Activated CD4-positive, alpha-beta T cell treated with anti-CD3 and anti-CD28 coated beads for 36 hours (primary cell): ENCODE measurements at regions of chr3 and their contacts with region 1.

Region 1: DNA sequence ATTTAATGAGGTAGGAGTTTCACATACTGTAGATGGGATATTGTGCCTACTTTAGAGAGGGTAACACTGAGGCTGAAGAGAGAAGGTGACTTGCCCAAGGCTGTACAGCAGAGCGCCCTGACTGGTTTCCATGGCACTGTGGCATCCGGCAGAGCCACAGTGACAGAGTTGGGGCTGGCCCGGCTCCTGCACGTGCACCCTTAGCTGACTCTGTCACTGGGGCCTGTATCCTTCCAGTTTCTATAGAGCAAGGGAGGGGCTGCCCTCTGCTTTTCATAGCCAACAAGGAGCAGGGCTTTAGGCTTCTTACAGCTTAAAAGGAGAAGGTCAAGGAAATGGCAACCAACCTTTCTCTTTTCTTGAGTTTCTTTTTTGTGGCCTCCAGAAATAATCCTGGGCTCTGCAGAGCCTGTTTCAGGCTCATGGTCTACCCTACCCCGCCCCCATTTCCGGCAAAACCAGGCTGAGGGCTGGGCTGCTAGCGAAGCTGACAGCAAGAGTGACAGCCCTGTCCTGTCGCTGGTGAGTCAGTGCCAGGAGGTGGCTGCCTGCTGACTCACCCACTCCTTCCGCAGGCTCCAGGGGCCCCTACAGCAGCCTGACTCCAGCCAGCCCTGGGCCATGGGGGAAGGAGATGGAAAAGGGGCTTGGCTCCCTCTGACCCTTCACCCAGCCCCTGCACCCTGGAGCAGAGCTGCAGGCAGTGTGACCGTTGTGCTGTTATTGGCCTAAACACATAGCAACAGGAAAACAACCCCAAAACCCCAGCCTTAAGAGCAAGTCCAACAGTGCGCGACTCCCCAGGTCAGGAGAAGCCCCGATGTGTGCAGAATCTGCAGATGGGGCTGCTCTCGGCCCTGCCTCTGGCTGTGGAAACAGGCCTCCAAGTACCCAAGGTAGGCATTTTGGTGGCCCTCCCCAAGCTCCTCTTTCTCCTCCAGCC is 29.8 kb downstream of the SLC6A6 start:
- DNase-seq: peak; percentile 97
- ATAC-seq: peak; percentile 88
- H3K4me3 Mint-ChIP-seq: peak overlapping the region; percentile 63
- H3K27ac Mint-ChIP-seq: peak overlapping the region; percentile 96
- H3K4me1 Mint-ChIP-seq: peaks cover 86% of the 10 kb centered on the region
- H3K27me3 Mint-ChIP-seq: no peaks in the 10 kb centered on the region

Region 2: DNA sequence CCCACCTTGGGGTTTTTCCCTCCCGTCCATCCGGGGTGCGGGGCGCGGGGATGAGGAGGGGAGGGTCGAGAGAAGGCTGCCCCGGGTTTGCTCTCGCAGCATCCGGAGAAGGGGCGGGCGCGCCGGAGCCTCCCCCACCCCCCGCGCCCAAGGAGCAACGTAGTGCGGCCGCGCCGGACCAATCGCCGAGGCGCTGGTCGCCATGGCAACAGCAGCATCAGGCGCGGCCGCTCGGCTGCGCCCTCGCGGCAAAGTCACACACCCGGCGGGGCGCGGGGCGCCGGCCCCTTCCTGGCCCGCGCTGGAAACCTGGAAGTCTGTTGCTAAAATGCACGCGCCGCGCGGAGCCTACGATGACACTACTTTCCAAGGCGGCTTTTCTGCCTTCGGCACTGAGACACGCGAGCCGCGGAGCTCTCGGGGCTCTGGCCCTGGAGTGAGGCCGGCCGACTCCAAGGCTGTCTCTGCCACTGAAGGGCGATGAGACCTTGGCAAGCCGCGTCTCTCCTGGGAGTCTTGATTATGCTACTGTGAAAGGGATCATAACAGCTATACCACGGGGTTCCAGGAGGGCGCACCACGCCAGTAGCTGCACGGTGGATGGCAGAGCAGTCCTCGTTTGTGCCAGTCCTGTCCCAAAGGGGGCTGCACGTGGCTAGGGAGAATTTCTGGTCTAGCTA is 1358.7 kb before region 1 on chr3 and contains the start of gene IQSEC1:
- CTCF ChIA-PET with region 1: no interaction called
- POLR2A ChIA-PET with region 1: no interaction called
- intact Hi-C with region 1: loop called in 1 of 2 experiments (anchors 5 kb)
- DNase-seq: peak; percentile 89
- ATAC-seq: peak; percentile 68
- H3K4me3 Mint-ChIP-seq: peak within 1 kb of the TSS; percentile 80
- H3K27ac Mint-ChIP-seq: peak within 1 kb of the TSS; percentile 51
- H3K4me1 Mint-ChIP-seq: peaks cover 34% of the 10 kb centered on the region
- H3K27me3 Mint-ChIP-seq: peaks cover 21% of the 10 kb centered on the region
- total RNA-seq, gene IQSEC1: 36.8 to 40.4 TPM

Region 3: DNA sequence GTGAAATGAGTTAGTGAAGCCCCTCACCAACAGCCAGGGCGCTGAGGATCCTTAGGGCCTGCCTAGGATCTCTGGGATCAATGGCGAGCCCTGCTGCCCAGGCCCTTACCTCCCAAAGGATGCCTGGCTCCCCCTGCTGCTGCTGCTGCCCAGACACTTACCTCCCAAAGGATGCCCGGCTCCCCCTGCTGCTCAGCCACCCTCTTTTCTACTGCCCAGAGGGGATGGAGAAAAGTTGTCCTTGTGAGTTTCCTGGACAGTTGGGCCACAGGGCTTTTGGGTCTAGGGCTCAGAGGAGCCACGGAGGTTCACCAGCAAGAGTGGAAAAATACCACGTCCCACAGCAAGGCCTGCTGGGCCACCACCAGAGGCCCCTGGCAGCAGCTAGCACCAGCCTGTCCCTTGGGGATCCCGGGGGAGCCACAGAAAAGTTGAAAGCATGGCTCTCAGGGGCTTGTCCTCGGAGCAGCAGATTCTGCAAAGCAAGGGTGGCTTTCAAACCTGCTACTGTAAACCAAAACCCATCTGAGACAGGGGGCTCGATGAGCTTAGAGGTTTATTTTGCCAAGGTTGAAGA is 29.7 kb after region 1 on chr3:
- CTCF ChIA-PET with region 1: interaction called, 5 read pairs
- POLR2A ChIA-PET with region 1: interaction called, 5 read pairs
- intact Hi-C with region 1: loop called in 1 of 2 experiments (anchors 1 kb)
- DNase-seq: peak; percentile 64
- ATAC-seq: peak; percentile 23
- H3K4me3 Mint-ChIP-seq: no peak overlapping the region
- H3K27ac Mint-ChIP-seq: peak overlapping the region; percentile 83
- H3K4me1 Mint-ChIP-seq: peaks cover 38% of the 10 kb centered on the region
- H3K27me3 Mint-ChIP-seq: no peaks in the 10 kb centered on the region

Region 4: GRCh38 chr3:14651440-14652251 is 219.5 kb after region 1 on chr3 and contains the start of gene CCDC174:
- CTCF ChIA-PET with region 1: no interaction called
- POLR2A ChIA-PET with region 1: no interaction called
- intact Hi-C with region 1: loop called (anchors 1 to 10 kb)
- DNase-seq: peak; percentile 95
- ATAC-seq: peak; percentile 99
- H3K4me3 Mint-ChIP-seq: peak within 1 kb of the TSS; percentile 93
- H3K27ac Mint-ChIP-seq: peak within 1 kb of the TSS; percentile 96
- H3K4me1 Mint-ChIP-seq: peaks cover 40% of the 10 kb centered on the region
- H3K27me3 Mint-ChIP-seq: no peaks in the 10 kb centered on the region
- total RNA-seq, gene CCDC174: 16.2 to 18.2 TPM